ENCODE measurements at regions of chr16 and their contacts with region 1.

Region 1: DNA sequence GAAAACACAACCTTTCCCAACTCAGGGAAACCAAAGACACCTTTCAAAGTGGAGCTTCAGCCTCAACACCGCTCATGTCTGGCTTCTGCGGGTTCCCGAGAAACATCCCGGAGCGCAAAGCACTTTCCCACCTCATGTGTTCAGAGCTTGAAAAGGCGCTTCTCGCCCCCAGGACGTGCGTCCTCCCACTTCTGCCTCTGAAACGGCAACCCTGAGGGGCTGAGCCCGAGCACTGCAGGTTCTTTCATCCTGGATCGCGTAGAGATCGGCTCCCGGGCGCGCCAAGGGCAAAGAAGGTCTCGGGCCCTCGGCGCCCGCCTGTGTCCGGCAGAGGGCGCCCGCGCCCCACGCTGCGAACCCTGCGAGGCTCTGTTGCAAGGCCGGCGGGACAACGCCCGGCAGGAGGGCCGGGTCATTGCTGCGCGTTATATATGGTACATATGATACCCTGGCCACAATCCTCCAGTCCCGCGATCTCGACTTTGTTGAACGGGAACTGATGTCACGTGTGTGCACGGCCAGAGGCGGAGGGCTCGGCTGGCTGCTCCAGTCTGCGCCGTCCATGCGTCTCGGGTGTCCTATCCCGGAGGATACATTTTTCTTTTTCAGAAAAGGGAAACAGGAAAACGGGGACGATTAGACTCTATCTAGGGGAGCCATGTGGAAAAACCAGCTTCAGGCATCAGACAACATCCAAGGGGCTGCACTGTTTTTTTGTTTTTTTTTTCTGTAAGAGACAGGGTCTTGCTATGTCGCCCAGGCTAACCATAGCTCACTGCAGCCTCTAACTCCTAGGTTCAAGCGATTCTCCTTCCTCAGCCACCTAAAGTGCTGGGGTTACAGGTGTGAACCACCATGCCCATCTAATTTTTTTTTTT is 19.1 kb downstream of the COQ7 start:
- DNase-seq: peak; percentile 92 to 94 (median 92)
- ATAC-seq: peak; percentile 99
- H3K4me3 ChIP-seq: no peak overlapping the region
- H3K4me1 ChIP-seq: peaks cover 7% of the 10 kb centered on the region
- CTCF ChIP-seq: peak; percentile 98

Region 2: GRCh38 chr16:19167710-19168370 is 81.3 kb after region 1 on chr16 and contains the start of gene SYT17:
- intact Hi-C with region 1: loop called in 1 of 2 experiments (anchors 5 kb)
- DNase-seq: peak; percentile 76 to 89 (median 80)
- ATAC-seq: peak; percentile 95
- H3K4me3 ChIP-seq: peak within 1 kb of the TSS; percentile 38
- H3K4me1 ChIP-seq: peaks cover 16% of the 10 kb centered on the region
- CTCF ChIP-seq: peak; percentile 87
- total RNA-seq, gene SYT17: 4.9 to 13.3 (median 5.9) TPM

Region 3: GRCh38 chr16:19236561-19237209 is 150.1 kb after region 1 on chr16:
- intact Hi-C with region 1: no loop called
- DNase-seq: peak in 1 of 3 donors; percentile 37
- ATAC-seq: peak; percentile 98
- H3K4me3 ChIP-seq: no peak overlapping the region
- H3K4me1 ChIP-seq: peaks cover 6% of the 10 kb centered on the region
- CTCF ChIP-seq: no peak

Region 4: GRCh38 chr16:19374402-19374801 is 287.8 kb after region 1 on chr16:
- intact Hi-C with region 1: loop called in 1 of 2 experiments (anchors 5 kb)
- DNase-seq: no peak
- ATAC-seq: no peak
- H3K4me3 ChIP-seq: no peak overlapping the region
- H3K4me1 ChIP-seq: no peaks in the 10 kb centered on the region
- CTCF ChIP-seq: no peak

Region 5: DNA sequence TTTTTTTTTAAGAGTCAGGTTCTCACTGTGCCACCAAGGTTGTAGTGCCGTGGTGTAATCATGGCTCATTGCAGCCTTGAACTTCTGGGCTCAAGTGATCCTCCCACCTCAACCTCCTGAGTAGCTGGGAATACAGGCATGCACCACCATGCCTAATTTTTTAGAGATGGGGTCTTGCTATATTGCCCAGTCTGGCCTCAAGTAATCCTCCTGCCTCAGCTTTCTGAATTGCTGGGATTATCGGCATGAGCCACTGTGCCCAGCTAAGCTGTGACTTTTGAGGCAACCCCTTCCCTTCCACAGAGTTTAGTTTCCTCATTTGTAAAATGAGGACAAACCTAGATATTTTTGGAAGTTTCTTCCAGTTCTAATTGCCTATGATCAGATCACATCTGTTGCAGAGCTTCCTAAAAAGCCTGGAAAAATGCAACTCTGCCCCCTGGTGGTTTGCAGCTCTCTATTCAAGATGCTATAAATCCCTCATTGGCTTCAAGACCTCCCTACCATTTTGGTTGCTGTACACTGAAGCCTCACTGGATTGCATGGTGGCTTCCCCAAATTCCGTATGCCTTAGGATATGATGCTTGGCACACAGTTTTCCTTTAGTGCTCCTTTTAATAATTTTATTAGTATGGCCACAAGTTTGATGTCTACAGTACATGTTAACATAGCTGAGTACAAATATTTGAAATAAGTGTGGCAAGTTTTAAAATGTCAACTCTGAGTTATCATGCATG is 416.0 kb after region 1 on chr16:
- intact Hi-C with region 1: loop called in 1 of 2 experiments (anchors 5 kb)
- DNase-seq: peak in 2 of 3 donors; percentile 50 to 87
- ATAC-seq: peak; percentile 80
- H3K4me3 ChIP-seq: no peak overlapping the region
- H3K4me1 ChIP-seq: no peaks in the 10 kb centered on the region
- CTCF ChIP-seq: peak; percentile 55